Heart right ventricle (tissue), 16 donors: ENCODE measurements at regions of chr17 and their contacts with region 1.

Region 1: DNA sequence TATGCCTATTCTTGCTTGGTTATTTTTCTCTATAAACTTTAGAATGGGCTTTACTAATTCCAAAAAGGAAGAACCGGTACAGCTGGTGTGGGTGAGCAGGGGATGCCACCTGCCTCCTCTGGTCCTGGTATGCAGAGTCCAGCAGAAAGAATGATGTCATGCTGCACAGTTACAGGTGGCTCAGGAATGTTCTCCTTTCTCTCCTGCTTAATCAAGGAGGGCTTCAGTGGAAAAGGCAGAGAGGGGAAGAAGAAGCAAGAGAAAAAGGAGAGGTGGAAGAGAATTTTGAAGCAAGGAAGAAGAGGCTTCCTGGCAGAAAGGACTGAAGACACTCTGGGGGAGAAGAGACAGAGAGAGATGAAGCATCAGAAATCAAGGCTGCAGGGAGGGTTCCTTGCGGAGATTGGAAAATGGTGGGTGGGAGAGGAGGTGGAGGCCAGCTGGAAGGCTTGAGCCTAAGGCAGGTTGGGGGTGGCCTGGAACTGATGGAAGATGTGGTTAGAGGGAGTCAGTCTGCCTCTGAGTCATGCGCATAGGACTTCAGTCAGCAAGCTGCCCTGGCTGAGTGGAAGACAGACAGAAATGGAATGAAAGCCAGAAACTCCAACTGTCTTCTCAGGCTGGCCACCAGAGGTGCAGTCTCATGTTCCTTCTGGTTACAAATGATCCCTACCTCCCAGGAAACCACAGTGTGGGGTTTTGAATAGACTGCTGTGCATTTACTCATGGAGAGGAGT is 64.6 kb upstream of the CRHR1 start:
- DNase-seq: no peak
- ATAC-seq: peak in 4 of 8 donors; percentile 29 to 84 (median 57)
- H3K4me3 ChIP-seq: no peak overlapping the region
- H3K27ac ChIP-seq: no peak overlapping the region
- H3K4me1 ChIP-seq: no peaks in the 10 kb centered on the region
- H3K27me3 ChIP-seq: peaks cover 0 to 74% (median 38%) of the 10 kb centered on the region in 7 donors
- CTCF ChIP-seq: peak in 5 of 9 donors; percentile 22 to 45 (median 32)

Region 2: DNA sequence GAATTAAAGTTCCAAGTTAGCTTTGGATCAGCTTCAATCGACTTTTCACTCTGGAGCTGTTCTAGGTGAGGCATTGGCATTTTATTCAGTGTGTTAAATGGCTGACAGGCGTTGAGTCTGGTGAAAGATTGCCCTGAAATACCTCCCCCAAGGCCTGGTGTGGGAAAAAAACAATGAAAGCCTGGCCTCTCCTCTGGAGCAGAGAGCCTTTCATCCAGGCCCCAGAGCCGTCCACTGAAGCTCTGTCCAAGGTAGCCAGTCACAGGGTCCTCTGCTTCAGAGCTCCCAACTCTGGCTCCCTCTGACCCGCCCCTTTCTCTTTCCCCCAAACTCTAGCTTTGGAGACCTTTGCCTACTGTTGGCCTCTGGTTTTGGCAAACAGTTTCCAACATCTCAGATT is 59.0 kb before region 1 on chr17:
- intact Hi-C with region 1: no loop called
- DNase-seq: no peak
- ATAC-seq: no peak
- H3K4me3 ChIP-seq: no peak overlapping the region
- H3K27ac ChIP-seq: no peak overlapping the region
- H3K4me1 ChIP-seq: no peaks in the 10 kb centered on the region
- H3K27me3 ChIP-seq: peaks cover 0 to 57% (median 14%) of the 10 kb centered on the region in 7 donors
- CTCF ChIP-seq: no peak

Region 3: DNA sequence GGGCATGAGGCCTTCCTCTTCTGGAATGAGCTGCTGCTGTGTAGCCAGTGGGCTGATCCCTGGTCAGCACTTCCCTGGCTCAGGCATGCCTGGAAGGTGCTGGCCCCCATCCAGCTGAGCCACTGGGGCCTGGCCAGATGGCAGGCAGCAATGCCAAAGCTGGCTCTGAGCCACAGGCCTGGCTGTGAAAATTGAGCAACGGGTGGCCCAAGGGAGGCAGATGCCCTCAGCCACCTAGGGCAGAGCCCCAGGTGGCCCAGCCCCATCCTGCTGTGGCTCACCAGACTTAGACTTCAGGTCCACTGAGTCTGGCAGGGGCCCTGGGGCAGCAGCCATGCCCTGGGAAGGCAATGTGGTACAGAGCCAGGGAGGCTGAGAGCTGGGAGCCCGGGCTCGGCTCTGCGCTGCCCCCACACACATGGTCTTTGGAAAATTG is 56.1 kb after region 1 on chr17:
- intact Hi-C with region 1: no loop called
- DNase-seq: peak; percentile 31 to 60
- ATAC-seq: peak; percentile 53 to 84 (median 70)
- H3K4me3 ChIP-seq: no peak overlapping the region
- H3K27ac ChIP-seq: no peak overlapping the region
- H3K4me1 ChIP-seq: no peaks in the 10 kb centered on the region
- H3K27me3 ChIP-seq: peaks cover 0 to 70% (median 36%) of the 10 kb centered on the region in 7 donors
- CTCF ChIP-seq: no peak

Region 4: DNA sequence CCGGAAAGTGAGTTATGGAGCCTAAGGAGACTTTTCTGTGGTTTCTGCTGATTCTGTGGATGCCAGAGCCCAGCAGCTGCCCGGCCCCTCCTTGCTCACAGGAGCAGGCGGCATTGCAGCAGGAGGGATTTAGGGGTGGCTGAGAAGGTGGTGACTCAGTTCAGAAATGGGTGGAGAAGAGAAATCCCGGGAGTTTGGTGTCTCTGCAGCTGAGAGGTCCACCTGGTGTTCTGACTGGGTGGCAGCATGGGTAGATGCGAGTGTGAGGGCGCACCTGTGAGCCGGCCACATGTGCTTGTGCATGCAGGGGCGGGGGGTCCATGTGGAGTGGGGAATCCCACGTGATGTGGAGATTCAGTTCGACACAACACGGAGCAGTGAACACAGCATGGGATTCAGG is 109.1 kb after region 1 on chr17:
- intact Hi-C with region 1: loop called in 2 of 10 experiments (anchors 10 kb)
- DNase-seq: no peak
- ATAC-seq: no peak
- H3K4me3 ChIP-seq: no peak overlapping the region
- H3K27ac ChIP-seq: no peak overlapping the region
- H3K4me1 ChIP-seq: no peaks in the 10 kb centered on the region
- H3K27me3 ChIP-seq: peaks cover 0 to 76% (median 36%) of the 10 kb centered on the region in 7 donors
- CTCF ChIP-seq: no peak